Mammary epithelial cell (primary cell): ENCODE measurements at regions of chr5 and their contacts with region 1.

Region 1: DNA sequence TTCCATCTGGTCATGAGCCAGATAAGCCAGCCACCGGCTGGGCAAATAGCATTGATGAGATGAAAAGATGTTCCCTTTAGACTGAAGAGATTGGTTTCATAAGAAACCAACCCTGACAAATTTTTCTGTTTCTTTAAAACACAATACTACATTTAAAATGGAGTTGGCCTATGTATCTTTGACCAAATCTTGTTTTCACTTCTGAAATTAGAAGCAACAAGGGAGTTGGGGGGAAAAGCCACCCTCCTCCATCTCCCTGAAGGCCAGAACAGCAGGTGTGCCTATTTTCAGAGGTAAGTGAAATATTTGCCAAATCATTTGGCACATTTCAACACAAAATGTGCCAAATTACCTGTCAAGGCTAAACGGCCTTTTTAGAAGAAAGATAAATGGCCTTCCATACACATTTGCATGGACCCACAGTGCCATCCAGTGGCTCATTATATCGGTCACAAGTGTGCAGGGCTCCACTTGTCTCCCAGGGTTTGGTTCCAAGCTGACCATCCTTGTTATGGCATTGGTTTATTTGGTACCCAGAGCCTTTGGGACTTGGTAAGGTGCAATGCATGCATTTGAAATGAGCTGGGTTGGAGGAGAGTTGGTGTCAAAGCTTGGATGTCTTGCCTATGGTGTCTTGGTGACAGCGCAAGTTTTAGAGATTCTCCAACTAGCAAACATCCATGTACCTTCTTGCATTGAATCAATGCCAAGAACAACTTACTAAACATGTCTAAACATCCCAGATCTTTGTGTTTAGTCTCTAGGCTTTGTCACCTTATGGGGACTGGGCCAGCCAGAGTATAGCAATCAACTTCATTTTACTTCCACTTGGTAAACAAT is 372.0 kb upstream of the KIF2A start:
- DNase-seq: peak; percentile 69
- H3K4me3 ChIP-seq: no peak overlapping the region
- H3K27ac ChIP-seq: no peak overlapping the region
- H3K4me1 ChIP-seq: peaks cover 28% of the 10 kb centered on the region
- H3K27me3 ChIP-seq: no peaks in the 10 kb centered on the region
- CTCF ChIP-seq: peak; percentile 81 to 85

Region 2: DNA sequence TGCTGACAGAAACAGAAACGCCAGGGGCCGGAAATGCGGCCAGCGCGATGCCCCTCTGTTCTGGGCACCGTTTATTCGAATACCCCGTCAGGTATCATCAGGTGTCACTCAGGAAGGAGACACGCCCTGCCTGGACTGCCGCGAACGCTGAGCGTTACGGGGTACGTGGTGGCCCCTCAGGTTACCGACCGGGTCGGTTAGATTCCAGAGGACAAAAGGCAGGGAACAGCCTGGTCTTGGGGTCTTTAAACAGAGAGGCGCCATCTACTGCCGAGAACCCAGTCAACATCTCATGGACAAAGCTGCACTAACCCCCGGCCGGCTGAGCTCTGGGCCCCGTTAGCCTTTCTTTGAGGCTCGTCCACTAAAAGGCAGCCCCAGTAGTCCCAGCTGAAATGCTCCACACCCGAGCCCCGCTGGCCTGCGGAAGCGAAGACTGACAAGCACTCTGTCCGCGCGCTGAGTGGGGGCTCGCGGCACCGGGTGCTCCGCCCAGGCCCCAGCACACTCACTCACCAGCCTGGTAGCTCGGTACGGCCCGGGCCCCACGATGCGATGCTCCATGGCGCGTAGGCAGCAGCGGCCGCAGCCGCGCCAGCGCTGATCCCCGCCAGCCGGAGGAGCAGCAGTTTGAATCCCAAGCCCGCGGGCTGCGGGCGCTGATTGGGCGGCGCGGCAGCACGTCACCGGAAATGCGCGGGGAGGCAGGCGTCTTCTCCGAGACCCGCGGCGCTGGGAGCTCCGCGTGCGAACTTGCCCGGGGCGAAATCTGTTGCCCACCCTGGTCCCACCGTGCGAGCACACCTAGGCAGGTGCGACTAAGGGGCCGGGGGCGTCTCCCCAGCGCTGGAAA is 1234.3 kb before region 1 on chr5 and contains the start of gene DEPDC1B:
- CTCF ChIA-PET with region 1: no interaction called
- dilution Hi-C with region 1: no loop called
- in situ Hi-C with region 1: loop called in 1 of 2 experiments (anchors 25 kb)
- intact Hi-C with region 1: no loop called
- DNase-seq: peak; percentile 91
- H3K4me3 ChIP-seq: peak within 1 kb of the TSS; percentile 80 to 90 (median 84)
- H3K27ac ChIP-seq: peak within 1 kb of the TSS; percentile 82
- H3K4me1 ChIP-seq: peaks cover 20% of the 10 kb centered on the region
- H3K27me3 ChIP-seq: no peaks in the 10 kb centered on the region
- CTCF ChIP-seq: peak in 1 of 2 donors; percentile 22
- total RNA-seq, gene DEPDC1B: 12.3 to 17.9 TPM

Region 3: DNA sequence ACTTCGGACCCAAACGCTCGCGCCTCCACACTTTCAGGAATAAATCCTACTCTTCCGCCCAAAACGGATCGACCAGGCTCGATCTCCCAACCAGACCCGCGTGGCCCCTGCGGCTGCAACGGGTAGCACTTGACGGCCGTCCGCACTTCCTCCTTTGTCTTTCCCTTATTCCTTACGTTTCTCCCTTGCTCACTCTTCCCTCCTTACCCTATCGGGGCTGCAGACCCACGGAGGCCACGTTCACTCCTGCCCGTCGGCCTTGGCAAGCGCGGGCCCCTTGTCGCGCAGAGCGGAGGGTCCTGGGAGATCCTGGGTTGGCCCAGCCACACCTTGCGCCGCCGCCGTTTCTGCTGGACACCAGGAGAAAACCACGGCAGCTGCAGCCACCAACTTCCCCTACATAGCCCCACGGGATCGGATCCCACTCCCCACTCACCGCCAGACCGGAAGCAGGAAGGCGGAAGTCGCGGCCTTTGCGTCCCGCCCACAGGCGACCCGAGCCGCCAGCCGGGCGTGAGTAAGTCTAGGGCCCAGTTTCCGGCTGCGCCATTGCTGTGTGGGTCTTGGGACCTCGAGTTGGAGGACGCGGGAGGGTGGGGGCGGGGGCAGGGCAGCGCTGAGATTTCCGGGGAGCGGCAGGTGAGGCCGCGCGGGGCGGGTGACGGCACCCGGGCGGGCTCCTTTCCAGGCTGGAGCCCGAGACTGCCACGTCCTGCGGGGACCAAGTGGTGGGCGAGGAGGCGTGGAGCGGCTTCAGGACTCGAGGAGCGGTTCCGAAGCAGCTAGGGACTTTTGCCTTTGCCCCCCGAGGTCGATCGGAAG is 771.8 kb before region 1 on chr5 and contains the start of gene SMIM15:
- CTCF ChIA-PET with region 1: no interaction called
- dilution Hi-C with region 1: no loop called
- in situ Hi-C with region 1: loop called in 1 of 2 experiments (anchors 25 kb)
- intact Hi-C with region 1: loop called (anchors 2 kb)
- DNase-seq: peak; percentile 86
- H3K4me3 ChIP-seq: peak within 1 kb of the TSS; percentile 95 to 97 (median 96)
- H3K27ac ChIP-seq: peak within 1 kb of the TSS; percentile 94
- H3K4me1 ChIP-seq: peaks cover 12% of the 10 kb centered on the region
- H3K27me3 ChIP-seq: no peaks in the 10 kb centered on the region
- CTCF ChIP-seq: peak in 1 of 2 donors; percentile 0
- total RNA-seq, gene SMIM15: 36.7 to 75.0 TPM

Region 4: GRCh38 chr5:61331407-61332357 is 602.3 kb before region 1 on chr5 and contains the start of gene ZSWIM6:
- CTCF ChIA-PET with region 1: interaction called, 3 read pairs
- dilution Hi-C with region 1: no loop called
- in situ Hi-C with region 1: no loop called
- intact Hi-C with region 1: loop called (anchors 1 kb)
- DNase-seq: peak; percentile 98
- H3K4me3 ChIP-seq: peak within 1 kb of the TSS; percentile 93 to 96 (median 94)
- H3K27ac ChIP-seq: peak within 1 kb of the TSS; percentile 75
- H3K4me1 ChIP-seq: peaks cover 43% of the 10 kb centered on the region
- H3K27me3 ChIP-seq: no peaks in the 10 kb centered on the region
- CTCF ChIP-seq: no peak
- total RNA-seq, gene ZSWIM6: 9.3 to 9.7 TPM

Region 5: DNA sequence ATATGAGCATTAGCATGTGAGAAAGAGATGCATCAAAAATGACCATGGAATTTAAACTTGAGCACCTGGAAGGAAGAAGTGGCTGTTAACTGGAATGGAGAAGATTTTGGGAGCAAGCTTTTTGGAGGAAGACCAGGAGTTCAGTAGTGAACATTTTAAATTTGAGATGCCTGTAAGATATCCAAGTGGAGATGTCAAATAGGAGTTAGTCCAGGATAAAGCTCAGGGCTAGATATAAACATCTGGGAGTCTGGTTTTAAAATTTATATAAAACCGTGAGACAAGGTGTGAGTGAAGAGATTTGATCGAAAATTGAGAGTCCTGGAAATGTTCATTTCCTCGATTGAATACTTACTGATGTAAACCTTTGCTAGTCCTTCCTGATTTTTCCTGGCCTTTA is 384.5 kb before region 1 on chr5:
- CTCF ChIA-PET with region 1: no interaction called
- dilution Hi-C with region 1: no loop called
- in situ Hi-C with region 1: no loop called
- intact Hi-C with region 1: no loop called
- DNase-seq: no peak
- H3K4me3 ChIP-seq: no peak overlapping the region
- H3K27ac ChIP-seq: no peak overlapping the region
- H3K4me1 ChIP-seq: no peaks in the 10 kb centered on the region
- H3K27me3 ChIP-seq: no peaks in the 10 kb centered on the region
- CTCF ChIP-seq: no peak

Region 6: GRCh38 chr5:61768692-61769281 is 165.2 kb before region 1 on chr5:
- CTCF ChIA-PET with region 1: no interaction called
- dilution Hi-C with region 1: no loop called
- in situ Hi-C with region 1: no loop called
- intact Hi-C with region 1: loop called (anchors 1 kb)
- DNase-seq: peak; percentile 45
- H3K4me3 ChIP-seq: no peak overlapping the region
- H3K27ac ChIP-seq: no peak overlapping the region
- H3K4me1 ChIP-seq: no peaks in the 10 kb centered on the region
- H3K27me3 ChIP-seq: no peaks in the 10 kb centered on the region
- CTCF ChIP-seq: peak; percentile 98 to 100

Region 7: GRCh38 chr5:62143268-62144229 is 209.5 kb after region 1 on chr5:
- CTCF ChIA-PET with region 1: interaction called, 15 read pairs
- dilution Hi-C with region 1: no loop called
- in situ Hi-C with region 1: no loop called
- intact Hi-C with region 1: no loop called
- DNase-seq: peak; percentile 40
- H3K4me3 ChIP-seq: no peak overlapping the region
- H3K27ac ChIP-seq: no peak overlapping the region
- H3K4me1 ChIP-seq: peaks cover 14% of the 10 kb centered on the region
- H3K27me3 ChIP-seq: no peaks in the 10 kb centered on the region
- CTCF ChIP-seq: peak; percentile 58 to 61